Colonic mucosa (tissue), 4 donors: ENCODE measurements at regions of chr9 and their contacts with region 1.

Region 1: DNA sequence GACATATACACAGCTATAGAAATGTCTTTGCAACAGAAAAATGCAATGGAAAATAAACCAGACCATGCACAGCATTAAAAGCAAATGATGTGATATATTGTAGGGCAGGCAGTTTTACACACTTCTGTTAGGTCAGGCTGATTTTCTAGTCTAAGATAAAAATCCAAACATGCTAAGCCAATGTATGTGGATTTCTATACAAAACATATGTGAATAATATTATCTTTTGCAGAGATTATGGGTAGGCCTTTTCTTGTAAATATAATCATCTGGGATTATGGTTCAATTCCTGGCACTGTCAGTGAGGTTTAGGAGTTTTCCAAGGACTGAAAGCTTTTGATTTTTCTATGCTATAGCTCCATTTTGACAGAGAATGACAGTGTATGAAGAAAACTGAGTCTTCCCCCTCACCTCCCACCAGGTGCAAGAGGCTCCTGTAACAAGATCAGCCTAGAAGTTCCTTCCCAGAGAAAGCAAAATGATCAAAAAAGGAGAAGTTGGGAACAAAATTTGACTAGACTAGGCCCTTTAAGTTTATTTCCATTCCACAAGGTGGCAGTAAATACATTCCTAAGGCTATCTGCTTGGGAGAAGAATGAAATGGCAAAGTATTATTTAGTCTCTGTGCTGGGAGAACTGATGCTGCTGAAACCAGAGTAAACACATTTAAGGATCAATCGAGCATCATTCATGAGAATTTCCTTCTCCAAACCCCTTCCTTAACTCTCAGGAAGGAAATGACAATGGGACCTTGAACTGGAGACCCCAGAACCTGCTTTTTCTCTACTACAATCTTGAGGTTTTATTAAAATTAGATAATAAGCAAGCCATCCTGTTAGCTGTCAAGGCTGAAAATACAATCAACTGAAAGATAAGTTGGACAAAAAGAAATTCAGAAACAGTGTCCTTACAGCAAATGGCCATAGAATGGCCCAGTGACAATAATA is 133.0 kb upstream of the TUT7 start:
- DNase-seq: no peak
- H3K4me3 ChIP-seq: no peak overlapping the region
- H3K27ac ChIP-seq: no peak overlapping the region
- H3K4me1 ChIP-seq: no peaks in the 10 kb centered on the region
- H3K27me3 ChIP-seq: no peaks in the 10 kb centered on the region
- CTCF ChIP-seq: peak; percentile 52

Region 2: DNA sequence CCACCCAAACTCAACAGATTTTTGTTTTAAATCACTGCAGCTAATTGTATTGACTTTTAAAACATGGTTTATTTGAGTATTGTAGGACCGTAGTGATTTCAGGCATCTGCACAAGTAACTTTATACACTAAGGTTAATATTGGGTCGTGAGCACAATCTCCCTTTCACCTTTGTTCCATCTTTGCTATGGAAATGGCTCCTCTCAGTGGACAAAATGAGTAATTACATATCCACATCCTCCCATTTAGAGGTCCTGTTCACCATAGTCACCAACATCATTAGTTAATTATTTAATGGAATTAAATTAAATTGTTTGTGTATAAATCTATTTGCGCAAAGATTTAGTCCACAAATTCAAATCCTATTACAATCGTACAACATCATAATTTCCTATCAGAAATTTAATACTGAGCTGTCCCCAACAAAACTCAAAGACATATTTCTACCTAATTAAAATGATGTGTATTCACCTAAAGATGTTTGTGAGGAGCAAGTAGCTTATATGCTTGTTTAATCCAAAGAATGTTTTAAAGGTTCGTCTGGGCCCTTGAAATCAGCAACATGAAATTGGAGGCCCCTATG is 837.5 kb after region 1 on chr9:
- intact Hi-C with region 1: loop called (anchors 5 kb)
- DNase-seq: no peak
- H3K4me3 ChIP-seq: no peak overlapping the region
- H3K27ac ChIP-seq: no peak overlapping the region
- H3K4me1 ChIP-seq: no peaks in the 10 kb centered on the region
- H3K27me3 ChIP-seq: no peaks in the 10 kb centered on the region
- CTCF ChIP-seq: peak; percentile 71

Region 3: GRCh38 chr9:87342743-87343142 is 855.6 kb after region 1 on chr9:
- intact Hi-C with region 1: no loop called
- DNase-seq: no peak
- H3K4me3 ChIP-seq: no peak overlapping the region
- H3K27ac ChIP-seq: no peak overlapping the region
- H3K4me1 ChIP-seq: no peaks in the 10 kb centered on the region
- H3K27me3 ChIP-seq: peaks cover 4% of the 10 kb centered on the region
- CTCF ChIP-seq: no peak